Mammary epithelial cell (primary cell): ENCODE measurements at regions of chr10 and their contacts with region 1.

Region 1: DNA sequence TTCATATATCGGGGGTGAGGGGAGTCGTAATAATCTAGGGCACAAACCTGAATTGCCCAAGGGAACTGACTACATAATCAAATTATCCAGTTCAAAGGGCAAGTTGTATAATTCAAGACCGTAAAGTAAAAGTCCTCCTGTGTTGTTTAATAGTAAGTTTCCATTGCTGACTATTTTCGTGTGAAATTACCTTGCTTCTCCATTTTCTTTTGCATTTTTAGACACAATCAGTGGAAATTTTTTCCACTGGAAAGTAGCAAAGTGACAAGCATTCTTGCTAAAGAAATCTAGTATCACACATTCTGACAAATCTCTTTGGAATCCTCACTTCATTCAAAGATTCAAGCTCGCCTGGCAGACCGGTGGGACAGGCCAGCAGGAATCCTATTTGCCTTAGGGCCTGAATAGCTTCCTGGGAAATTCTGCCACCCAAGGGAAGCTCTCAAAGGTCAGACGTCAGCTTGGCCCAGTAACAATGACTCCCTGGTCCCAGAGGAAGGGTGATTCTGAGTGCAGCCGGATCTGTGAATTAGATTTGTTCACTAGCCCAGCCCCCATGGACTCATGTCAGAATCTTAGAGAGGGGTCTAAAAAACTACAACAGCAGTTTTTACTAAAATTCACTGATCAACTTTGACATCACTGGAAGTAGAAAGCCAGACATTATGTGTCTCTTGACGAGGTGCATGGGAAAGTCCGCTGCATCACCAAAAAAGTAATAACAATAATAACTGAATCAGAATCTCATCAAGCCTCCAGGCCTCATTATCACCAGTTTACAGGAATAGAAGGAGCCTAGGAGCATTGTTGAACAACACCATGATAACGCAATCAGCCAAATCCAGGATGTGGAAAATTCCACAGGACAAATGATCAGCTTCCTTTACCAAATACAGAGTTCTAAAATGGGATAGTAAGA is 161.0 kb downstream of the SKIDA1 start:
- DNase-seq: peak; percentile 89
- H3K4me3 ChIP-seq: no peak overlapping the region
- H3K27ac ChIP-seq: peak overlapping the region; percentile 90
- H3K4me1 ChIP-seq: peaks cover 37% of the 10 kb centered on the region
- H3K27me3 ChIP-seq: no peaks in the 10 kb centered on the region
- CTCF ChIP-seq: no peak

Region 2: DNA sequence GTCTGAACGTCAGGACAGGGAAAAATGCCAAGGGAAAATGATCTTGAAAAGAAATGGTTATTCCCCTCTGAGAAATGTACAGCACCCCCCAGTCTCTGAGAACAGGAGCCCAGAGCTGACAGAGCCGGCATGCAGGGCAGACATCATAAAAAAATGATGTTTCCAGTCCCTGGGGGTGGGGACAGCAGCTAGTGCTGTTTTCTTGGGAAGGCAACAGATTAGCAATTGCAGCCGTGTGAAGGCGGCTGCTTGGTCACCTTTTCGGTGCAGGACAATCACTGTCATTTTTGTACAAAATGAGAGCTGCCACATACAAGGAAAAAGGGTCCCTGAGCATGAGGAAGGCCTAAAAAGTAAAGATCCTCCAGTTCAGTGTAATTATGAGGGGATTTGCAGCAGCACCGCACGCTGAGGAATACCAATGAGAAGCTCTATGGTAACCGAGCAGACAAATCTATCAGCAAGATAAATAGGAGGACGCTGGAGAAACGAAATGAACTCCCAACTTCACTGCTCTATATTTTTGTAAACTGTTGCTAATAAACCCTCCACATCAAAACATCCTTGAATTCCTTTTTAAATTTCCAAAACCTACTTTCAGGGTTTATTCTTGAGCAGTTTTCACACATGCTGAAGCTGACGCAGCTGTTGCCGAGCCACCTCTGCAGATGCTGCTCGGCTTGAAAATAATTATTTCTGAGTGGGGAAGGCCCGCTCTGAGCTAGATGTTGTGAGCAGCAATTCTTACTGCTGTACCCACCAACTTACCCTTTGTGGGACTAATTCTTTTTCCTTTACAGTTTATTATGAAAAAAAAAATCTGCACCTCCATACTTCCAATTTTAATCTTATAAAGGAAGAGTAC is 369.1 kb before region 1 on chr10:
- CTCF ChIA-PET with region 1: no interaction called
- dilution Hi-C with region 1: no loop called
- in situ Hi-C with region 1: no loop called
- intact Hi-C with region 1: no loop called
- DNase-seq: no peak
- H3K4me3 ChIP-seq: no peak overlapping the region
- H3K27ac ChIP-seq: no peak overlapping the region
- H3K4me1 ChIP-seq: no peaks in the 10 kb centered on the region
- H3K27me3 ChIP-seq: peaks cover 7% of the 10 kb centered on the region
- CTCF ChIP-seq: no peak

Region 3: GRCh38 chr10:21292763-21293517 is 71.5 kb before region 1 on chr10:
- CTCF ChIA-PET with region 1: no interaction called
- dilution Hi-C with region 1: no loop called
- in situ Hi-C with region 1: no loop called
- intact Hi-C with region 1: loop called (anchors 2 kb)
- DNase-seq: peak; percentile 93
- H3K4me3 ChIP-seq: peak overlapping the region; percentile 33 to 42 (median 35)
- H3K27ac ChIP-seq: peak overlapping the region; percentile 43
- H3K4me1 ChIP-seq: peaks cover 22% of the 10 kb centered on the region
- H3K27me3 ChIP-seq: no peaks in the 10 kb centered on the region
- CTCF ChIP-seq: no peak

Region 4: DNA sequence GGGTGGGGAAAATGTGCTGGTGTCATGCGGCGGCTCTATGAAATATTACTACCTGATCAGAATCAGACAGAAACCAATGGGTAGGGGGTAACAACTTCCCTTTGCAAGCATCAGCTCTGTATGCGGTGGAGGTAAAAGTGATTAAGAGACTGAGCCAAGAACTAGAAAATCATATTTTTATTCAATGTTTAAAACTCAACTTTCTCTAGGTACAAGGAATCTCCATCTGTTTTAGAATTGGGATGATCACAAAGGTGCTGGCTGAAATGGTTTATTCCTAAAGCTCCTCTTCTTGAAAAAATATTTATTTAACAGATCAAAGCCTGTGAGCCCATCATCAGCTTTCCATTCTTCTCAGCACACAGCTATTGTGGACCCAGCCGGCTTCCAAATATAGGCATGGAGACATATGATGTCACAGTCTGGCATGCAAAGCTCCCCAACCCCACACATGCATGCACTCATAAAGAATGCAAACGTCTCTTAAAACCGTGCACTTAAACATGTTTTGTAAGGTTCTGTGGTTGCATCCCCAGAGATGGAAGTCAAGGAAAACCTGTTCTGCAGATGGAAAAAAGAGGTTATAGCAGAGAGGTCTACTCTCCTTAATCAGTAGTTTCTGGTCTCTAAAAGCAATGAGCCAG is 35.1 kb after region 1 on chr10:
- CTCF ChIA-PET with region 1: no interaction called
- dilution Hi-C with region 1: no loop called
- in situ Hi-C with region 1: no loop called
- intact Hi-C with region 1: loop called (anchors 2 kb)
- DNase-seq: peak; percentile 84
- H3K4me3 ChIP-seq: no peak overlapping the region
- H3K27ac ChIP-seq: peak overlapping the region; percentile 77
- H3K4me1 ChIP-seq: peaks cover 36% of the 10 kb centered on the region
- H3K27me3 ChIP-seq: no peaks in the 10 kb centered on the region
- CTCF ChIP-seq: no peak